ENCODE measurements at regions of chr21 and their contacts with region 1.

Region 1: GRCh38 chr21:39715804-39716397 is 29.1 kb upstream of the IGSF5 start:
- DNase-seq: peak in 2 of 3 donors; percentile 8 to 15
- H3K4me3 ChIP-seq: no peak overlapping the region
- H3K4me3 Mint-ChIP-seq: no peak overlapping the region
- H3K27ac ChIP-seq: no peak overlapping the region
- H3K27ac Mint-ChIP-seq: no peak overlapping the region
- H3K4me1 ChIP-seq: no peaks in the 10 kb centered on the region
- H3K4me1 Mint-ChIP-seq: no peaks in the 10 kb centered on the region
- H3K27me3 ChIP-seq: no peaks in the 10 kb centered on the region
- H3K27me3 Mint-ChIP-seq: peaks cover 3 to 4% (median 4%) of the 10 kb centered on the region in 3 donors
- CTCF ChIP-seq: peak; percentile 81

Region 2: GRCh38 chr21:39518138-39518846 is 197.6 kb before region 1 on chr21:
- intact Hi-C with region 1: loop called (anchors 2 to 5 kb)
- DNase-seq: peak; percentile 10 to 46 (median 44)
- H3K4me3 ChIP-seq: no peak overlapping the region
- H3K4me3 Mint-ChIP-seq: no peak overlapping the region
- H3K27ac ChIP-seq: no peak overlapping the region
- H3K27ac Mint-ChIP-seq: no peak overlapping the region
- H3K4me1 ChIP-seq: no peaks in the 10 kb centered on the region
- H3K4me1 Mint-ChIP-seq: no peaks in the 10 kb centered on the region
- H3K27me3 ChIP-seq: no peaks in the 10 kb centered on the region
- H3K27me3 Mint-ChIP-seq: peaks cover 2 to 4% (median 2%) of the 10 kb centered on the region in 3 donors
- CTCF ChIP-seq: peak; percentile 97

Region 3: DNA sequence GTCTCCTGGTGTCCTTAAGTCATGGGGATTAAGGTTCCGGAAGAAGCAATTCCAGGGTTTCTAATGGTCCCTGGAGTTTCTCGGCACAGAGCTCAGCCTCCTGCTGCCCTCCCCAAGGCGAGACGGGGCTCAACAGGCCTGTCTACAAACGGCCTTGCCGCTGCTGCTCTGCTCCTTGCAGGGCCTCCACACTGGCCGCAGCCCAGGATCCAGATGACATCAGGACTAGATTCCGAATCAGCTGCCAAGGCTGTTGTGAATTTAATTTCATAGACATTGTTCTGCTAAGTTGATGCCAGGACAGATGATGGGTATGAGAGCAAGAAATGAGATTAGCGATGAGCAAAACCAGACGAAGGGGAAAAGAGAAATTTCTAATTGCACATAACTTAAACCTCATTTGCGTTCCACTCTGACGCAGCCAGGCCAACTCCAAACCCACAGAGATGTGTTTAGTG is 1348.5 kb after region 1 on chr21:
- intact Hi-C with region 1: no loop called
- DNase-seq: no peak
- H3K4me3 ChIP-seq: no peak overlapping the region
- H3K4me3 Mint-ChIP-seq: no peak overlapping the region
- H3K27ac ChIP-seq: no peak overlapping the region
- H3K27ac Mint-ChIP-seq: peak overlapping the region in 1 of 7 donors; percentile 46
- H3K4me1 ChIP-seq: peaks cover 8 to 14% of the 10 kb centered on the region in 2 donors
- H3K4me1 Mint-ChIP-seq: peaks cover 13% of the 10 kb centered on the region
- H3K27me3 ChIP-seq: peaks cover 0 to 2% of the 10 kb centered on the region in 2 donors
- H3K27me3 Mint-ChIP-seq: peaks cover 11 to 16% (median 15%) of the 10 kb centered on the region in 3 donors
- CTCF ChIP-seq: no peak